ENCODE measurements at regions of chrX and their contacts with region 1.

Region 1: DNA sequence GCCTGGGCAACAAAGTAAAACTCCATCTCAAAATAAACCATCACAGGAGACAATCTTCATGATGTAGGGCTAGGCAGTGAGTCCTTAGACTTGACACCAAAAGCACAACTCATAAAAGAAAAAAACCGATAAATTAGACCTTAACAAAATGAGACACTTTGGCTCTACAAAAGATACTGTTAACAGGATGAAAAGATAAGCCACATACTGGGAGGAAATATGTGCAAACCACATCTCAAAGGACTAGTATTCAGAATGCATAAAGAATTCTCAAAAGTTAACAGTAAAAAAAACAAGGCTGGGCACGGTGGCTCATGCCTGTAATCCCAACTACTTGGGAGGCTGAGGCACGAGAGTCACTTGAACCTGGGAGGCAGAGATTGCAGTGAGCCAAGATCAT is 13.2 kb downstream of the EFHC2 start:
- DNase-seq: peak in 1 of 9 experiments; percentile 34
- ATAC-seq: no peak
- H3K4me3 ChIP-seq: no peak overlapping the region
- H3K4me3 Mint-ChIP-seq: peak overlapping the region; percentile 35
- H3K27ac ChIP-seq: no peak overlapping the region
- H3K27ac Mint-ChIP-seq: peak overlapping the region; percentile 77
- H3K4me1 ChIP-seq: peaks cover 26% of the 10 kb centered on the region
- H3K4me1 Mint-ChIP-seq: peaks cover 36% of the 10 kb centered on the region
- H3K27me3 ChIP-seq: no peaks in the 10 kb centered on the region
- H3K27me3 Mint-ChIP-seq: no peaks in the 10 kb centered on the region
- CTCF ChIP-seq: no peak

Region 2: GRCh38 chrX:44343412-44344141 is 13.3 kb after region 1 on chrX and contains the start of gene EFHC2:
- CTCF ChIA-PET with region 1: no interaction called
- POLR2A ChIA-PET with region 1: no interaction called
- intact Hi-C with region 1: loop called in 1 of 2 experiments (anchors 2 kb)
- DNase-seq: peak; percentile 26 to 82 (median 57)
- ATAC-seq: peak; percentile 55
- H3K4me3 ChIP-seq: peak within 1 kb of the TSS; percentile 51 to 65
- H3K4me3 Mint-ChIP-seq: peak within 1 kb of the TSS; percentile 93
- H3K27ac ChIP-seq: peak within 1 kb of the TSS; percentile 84 to 90
- H3K27ac Mint-ChIP-seq: peak within 1 kb of the TSS; percentile 95
- H3K4me1 ChIP-seq: peaks cover 14% of the 10 kb centered on the region
- H3K4me1 Mint-ChIP-seq: peaks cover 27% of the 10 kb centered on the region
- H3K27me3 ChIP-seq: no peaks in the 10 kb centered on the region
- H3K27me3 Mint-ChIP-seq: no peaks in the 10 kb centered on the region
- CTCF ChIP-seq: no peak
- total RNA-seq, gene EFHC2: 1.3 to 1.8 TPM